Aorta (tissue), 5 donors: ENCODE measurements at regions of chr1 and their contacts with region 1.

Region 1: GRCh38 chr1:158087320-158087927 is 93.3 kb upstream of the CD1D start:
- DNase-seq: no peak
- ATAC-seq: peak; percentile 70
- H3K4me3 ChIP-seq: no peak overlapping the region
- H3K27ac ChIP-seq: no peak overlapping the region
- H3K4me1 ChIP-seq: no peaks in the 10 kb centered on the region
- H3K27me3 ChIP-seq: no peaks in the 10 kb centered on the region

Region 2: GRCh38 chr1:158035976-158036583 is 51.3 kb before region 1 on chr1:
- intact Hi-C with region 1: loop called (anchors 5 kb)
- DNase-seq: no peak
- ATAC-seq: peak; percentile 63
- H3K4me3 ChIP-seq: no peak overlapping the region
- H3K27ac ChIP-seq: no peak overlapping the region
- H3K4me1 ChIP-seq: peaks cover 0 to 11% of the 10 kb centered on the region in 2 donors
- H3K27me3 ChIP-seq: no peaks in the 10 kb centered on the region

Region 3: DNA sequence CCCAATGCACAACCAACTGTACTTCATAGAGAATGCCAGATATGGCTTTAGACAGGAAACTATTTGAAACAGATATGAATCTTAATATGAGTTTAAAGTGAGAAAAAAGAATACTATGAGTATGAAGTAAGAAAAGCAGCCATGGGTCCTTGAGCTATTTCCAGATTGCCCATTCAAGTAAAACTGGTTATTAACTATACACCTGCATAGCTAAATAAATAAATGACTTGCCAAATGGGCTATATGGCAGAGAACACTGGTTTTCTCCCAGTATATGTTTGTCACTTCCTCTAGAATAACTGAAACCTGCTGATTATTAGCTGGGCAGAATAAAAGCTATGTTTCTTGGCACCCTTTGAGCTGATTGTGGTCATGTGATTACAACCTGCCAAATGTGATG is 185.3 kb after region 1 on chr1:
- intact Hi-C with region 1: no loop called
- DNase-seq: no peak
- ATAC-seq: no peak
- H3K4me3 ChIP-seq: no peak overlapping the region
- H3K27ac ChIP-seq: no peak overlapping the region
- H3K4me1 ChIP-seq: no peaks in the 10 kb centered on the region
- H3K27me3 ChIP-seq: no peaks in the 10 kb centered on the region